Activated T-helper 2 cell treated with anti-CD3 and anti-CD28 coated beads, Interferon-gamma antibody, Interleukin-2, Interleukin-4, amounts not matched to agents 10 μg/mL and 5 μg/mL and 100 μg/mL, durations not matched to agents 14 hours and 24 hours and 36 hours (primary cell): ENCODE measurements at regions of chr4 and their contacts with region 1.

Region 1: GRCh38 chr4:122508083-122508482 is 51.6 kb upstream of the IL2 start:
- DNase-seq: no peak
- H3K4me3 Mint-ChIP-seq: peak overlapping the region; percentile 54
- H3K27ac Mint-ChIP-seq: peak overlapping the region; percentile 78
- H3K4me1 Mint-ChIP-seq: peaks cover 57% of the 10 kb centered on the region
- H3K27me3 Mint-ChIP-seq: peaks cover 22% of the 10 kb centered on the region

Region 2: DNA sequence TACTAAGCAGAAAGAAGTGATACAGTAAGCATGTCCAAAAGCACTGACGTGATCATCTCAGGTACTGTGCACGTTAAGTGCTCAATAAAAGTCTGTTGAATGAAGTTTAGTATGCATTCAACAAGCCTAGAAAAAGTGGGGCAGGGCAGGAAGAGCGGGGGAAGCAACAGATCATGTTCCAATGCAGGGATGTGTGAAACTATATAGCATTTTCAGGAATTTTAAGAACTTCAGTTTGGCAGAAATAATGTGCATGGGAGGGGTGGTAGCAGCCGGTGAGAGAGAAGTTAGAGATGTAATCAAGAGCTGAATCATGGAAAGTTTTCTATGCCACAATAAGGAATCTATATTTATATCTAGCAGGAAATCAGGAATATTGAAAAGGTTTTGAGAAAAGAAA is 665.2 kb before region 1 on chr4:
- intact Hi-C with region 1: no loop called
- DNase-seq: no peak
- H3K4me3 Mint-ChIP-seq: no peak overlapping the region
- H3K27ac Mint-ChIP-seq: no peak overlapping the region
- H3K4me1 Mint-ChIP-seq: no peaks in the 10 kb centered on the region
- H3K27me3 Mint-ChIP-seq: no peaks in the 10 kb centered on the region

Region 3: DNA sequence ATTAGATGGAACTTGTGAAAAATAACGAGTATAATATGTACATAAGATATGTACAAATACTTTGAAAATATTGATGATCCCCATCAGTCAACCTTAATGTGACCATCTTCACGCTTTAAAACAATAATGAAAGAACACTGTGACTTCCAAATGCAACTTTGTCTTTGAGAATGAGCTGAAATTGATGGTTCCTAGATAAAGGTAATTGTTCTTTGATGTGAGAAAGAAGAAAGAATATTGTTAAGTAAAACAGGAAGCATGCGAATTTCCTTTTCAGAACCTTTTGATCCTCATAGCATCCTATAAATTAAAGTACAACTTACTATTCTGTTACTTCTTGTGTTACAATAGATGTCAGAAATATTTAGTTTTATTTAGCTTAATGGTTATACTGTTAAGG is 73.8 kb before region 1 on chr4:
- intact Hi-C with region 1: no loop called
- DNase-seq: no peak
- H3K4me3 Mint-ChIP-seq: no peak overlapping the region
- H3K27ac Mint-ChIP-seq: no peak overlapping the region
- H3K4me1 Mint-ChIP-seq: peaks cover 6% of the 10 kb centered on the region
- H3K27me3 Mint-ChIP-seq: no peaks in the 10 kb centered on the region

Region 4: DNA sequence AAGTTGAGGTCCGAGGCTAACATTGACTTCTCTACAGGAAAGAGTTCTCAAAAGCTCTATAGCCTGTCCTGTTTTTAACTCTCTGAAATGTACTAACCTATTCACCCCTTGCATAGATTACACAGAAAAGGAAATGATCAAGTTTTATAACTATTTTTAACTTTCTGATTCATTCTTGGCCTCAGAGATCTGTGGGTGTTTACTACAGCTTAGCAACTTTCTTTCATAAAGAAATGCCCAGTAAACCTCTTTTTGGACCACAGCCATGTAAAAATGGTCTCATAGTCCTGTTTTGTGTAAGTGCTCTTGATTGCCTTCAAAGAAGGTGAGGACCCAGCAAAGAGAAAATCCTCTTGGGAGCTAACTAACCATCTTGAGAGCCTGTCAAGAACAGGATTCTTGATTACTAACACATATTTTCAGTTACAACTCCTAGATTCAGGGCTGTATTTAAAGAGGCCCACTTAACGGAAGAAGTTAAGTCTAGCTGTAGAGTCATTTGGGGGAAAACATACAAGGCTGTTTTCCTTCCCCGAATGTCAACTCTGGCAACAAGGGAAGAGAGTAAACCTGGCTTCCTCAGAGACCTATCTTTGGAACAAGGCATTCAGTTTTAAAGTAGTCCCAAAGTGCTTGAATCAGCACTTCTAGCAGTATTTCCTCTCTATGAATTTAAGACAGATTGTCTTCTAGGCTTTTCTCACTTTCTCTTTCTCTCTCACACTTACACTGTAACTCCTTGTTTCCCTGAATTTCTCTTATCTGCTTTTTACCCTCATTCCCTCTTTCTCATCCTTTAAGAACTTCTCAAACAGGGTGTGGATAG is 34.5 kb after region 1 on chr4:
- intact Hi-C with region 1: loop called (anchors 1 kb)
- DNase-seq: no peak
- H3K4me3 Mint-ChIP-seq: peak overlapping the region; percentile 53
- H3K27ac Mint-ChIP-seq: peak overlapping the region; percentile 87
- H3K4me1 Mint-ChIP-seq: peaks cover 74% of the 10 kb centered on the region
- H3K27me3 Mint-ChIP-seq: peaks cover 1% of the 10 kb centered on the region

Region 5: DNA sequence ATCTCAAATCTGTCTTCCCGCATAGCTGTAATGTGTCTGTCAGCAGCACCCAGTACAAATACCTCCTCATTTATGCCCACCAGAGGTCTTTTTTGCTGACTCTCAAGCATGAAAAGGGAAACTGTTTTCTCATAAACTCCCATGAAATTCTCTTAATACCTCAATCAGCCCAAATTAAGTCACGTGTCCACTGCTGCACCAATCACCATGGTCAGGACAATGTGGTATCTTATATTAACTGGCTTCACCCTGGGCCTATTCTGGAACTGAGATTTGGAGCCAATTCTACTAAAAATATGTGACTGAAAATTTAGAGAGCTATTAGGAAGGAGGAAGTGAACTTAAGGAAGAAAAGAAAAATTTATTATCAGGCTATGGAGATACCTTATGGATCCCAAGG is 54.4 kb after region 1 on chr4:
- intact Hi-C with region 1: no loop called
- DNase-seq: no peak
- H3K4me3 Mint-ChIP-seq: no peak overlapping the region
- H3K27ac Mint-ChIP-seq: no peak overlapping the region
- H3K4me1 Mint-ChIP-seq: peaks cover 7% of the 10 kb centered on the region
- H3K27me3 Mint-ChIP-seq: no peaks in the 10 kb centered on the region